ENCODE measurements at regions of chr5 and their contacts with region 1.

Region 1: GRCh38 chr5:81105261-81105877 is 127.8 kb upstream of the CKMT2 start:
- DNase-seq: no peak
- H3K4me3 ChIP-seq: no peak overlapping the region
- H3K4me3 Mint-ChIP-seq: no peak overlapping the region
- H3K27ac Mint-ChIP-seq: no peak overlapping the region
- H3K4me1 ChIP-seq: no peaks in the 10 kb centered on the region
- H3K4me1 Mint-ChIP-seq: no peaks in the 10 kb centered on the region
- H3K27me3 ChIP-seq: no peaks in the 10 kb centered on the region
- H3K27me3 Mint-ChIP-seq: no peaks in the 10 kb centered on the region
- CTCF ChIP-seq: no peak

Region 2: GRCh38 chr5:80686757-80687156 is 418.6 kb before region 1 on chr5:
- CTCF ChIA-PET with region 1: interaction called, 12 read pairs
- POLR2A ChIA-PET with region 1: interaction called, 7 read pairs
- intact Hi-C with region 1: loop called (anchors 1 kb)
- DNase-seq: no peak
- H3K4me3 ChIP-seq: no peak overlapping the region
- H3K4me3 Mint-ChIP-seq: no peak overlapping the region
- H3K27ac Mint-ChIP-seq: no peak overlapping the region
- H3K4me1 ChIP-seq: no peaks in the 10 kb centered on the region
- H3K4me1 Mint-ChIP-seq: no peaks in the 10 kb centered on the region
- H3K27me3 ChIP-seq: no peaks in the 10 kb centered on the region
- H3K27me3 Mint-ChIP-seq: no peaks in the 10 kb centered on the region
- CTCF ChIP-seq: peak; percentile 33 to 34

Region 3: GRCh38 chr5:80711938-80712337 is 393.4 kb before region 1 on chr5:
- CTCF ChIA-PET with region 1: interaction called, 7 read pairs
- POLR2A ChIA-PET with region 1: no interaction called
- intact Hi-C with region 1: loop called (anchors 1 kb)
- DNase-seq: peak; percentile 59 to 62
- H3K4me3 ChIP-seq: no peak overlapping the region
- H3K4me3 Mint-ChIP-seq: no peak overlapping the region
- H3K27ac Mint-ChIP-seq: no peak overlapping the region
- H3K4me1 ChIP-seq: peaks cover 4% of the 10 kb centered on the region; the same call in 1 of the 2 replicates
- H3K4me1 Mint-ChIP-seq: no peaks in the 10 kb centered on the region
- H3K27me3 ChIP-seq: no peaks in the 10 kb centered on the region
- H3K27me3 Mint-ChIP-seq: no peaks in the 10 kb centered on the region
- CTCF ChIP-seq: peak; percentile 57 to 60

Region 4: DNA sequence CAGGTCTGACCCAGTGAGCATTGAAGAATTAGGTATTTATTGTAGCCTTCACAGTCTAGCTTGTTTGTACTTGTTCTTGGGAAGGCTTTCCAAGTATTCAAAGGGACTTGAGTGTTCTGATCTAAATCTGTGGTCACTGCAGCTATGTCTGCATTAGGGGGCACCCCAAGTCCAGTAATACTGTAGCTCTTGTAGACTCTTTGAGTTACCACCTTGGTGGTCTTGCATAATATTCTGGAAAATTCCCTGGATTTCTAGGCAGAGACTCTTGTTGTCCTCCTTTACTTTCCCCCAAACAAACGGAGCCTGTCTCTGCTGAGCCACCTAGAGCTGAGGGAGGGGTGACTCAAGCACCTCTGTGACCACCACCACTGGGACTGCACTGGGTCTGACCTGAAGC is 301.0 kb before region 1 on chr5:
- CTCF ChIA-PET with region 1: interaction called, 3 read pairs
- POLR2A ChIA-PET with region 1: no interaction called
- intact Hi-C with region 1: loop called (anchors 10 kb)
- DNase-seq: peak in 1 of 2 experiments; percentile 22
- H3K4me3 ChIP-seq: no peak overlapping the region
- H3K4me3 Mint-ChIP-seq: no peak overlapping the region
- H3K27ac Mint-ChIP-seq: no peak overlapping the region
- H3K4me1 ChIP-seq: no peaks in the 10 kb centered on the region
- H3K4me1 Mint-ChIP-seq: peaks cover 5% of the 10 kb centered on the region
- H3K27me3 ChIP-seq: no peaks in the 10 kb centered on the region
- H3K27me3 Mint-ChIP-seq: no peaks in the 10 kb centered on the region
- CTCF ChIP-seq: no peak

Region 5: DNA sequence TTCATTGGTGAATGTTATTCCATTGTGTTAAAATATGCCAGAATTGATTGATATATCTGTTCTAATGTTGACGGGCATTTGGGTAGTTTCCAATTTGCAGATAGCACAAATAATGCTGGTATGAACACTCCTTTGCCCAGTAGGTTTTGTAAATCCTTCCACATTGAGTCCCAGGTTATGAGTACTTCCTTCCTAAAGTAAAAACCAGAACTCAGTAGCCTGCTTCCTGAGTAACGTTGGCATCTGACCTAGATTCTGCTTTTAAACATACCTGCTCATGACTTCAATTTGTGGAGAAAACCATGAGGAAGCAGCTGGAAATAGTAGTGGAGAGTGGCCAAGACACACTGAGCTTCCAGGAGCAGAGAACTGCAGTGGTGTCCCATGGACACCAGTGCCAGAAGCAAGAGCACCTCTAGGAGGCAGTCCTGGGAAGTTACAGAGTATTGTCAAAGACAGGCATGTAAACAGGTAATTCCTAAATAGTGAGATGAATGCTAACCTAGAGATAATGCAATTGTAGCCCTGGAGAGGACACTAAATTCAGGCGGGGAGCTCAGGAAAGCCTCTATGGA is 169.5 kb before region 1 on chr5:
- CTCF ChIA-PET with region 1: no interaction called
- POLR2A ChIA-PET with region 1: no interaction called
- intact Hi-C with region 1: loop called (anchors 2 kb)
- DNase-seq: no peak
- H3K4me3 ChIP-seq: no peak overlapping the region
- H3K4me3 Mint-ChIP-seq: no peak overlapping the region
- H3K27ac Mint-ChIP-seq: no peak overlapping the region
- H3K4me1 ChIP-seq: peaks cover 4% of the 10 kb centered on the region; the same call in 1 of the 2 replicates
- H3K4me1 Mint-ChIP-seq: peaks cover 8% of the 10 kb centered on the region
- H3K27me3 ChIP-seq: no peaks in the 10 kb centered on the region
- H3K27me3 Mint-ChIP-seq: no peaks in the 10 kb centered on the region
- CTCF ChIP-seq: no peak

Region 6: GRCh38 chr5:81117566-81117965 is 12.2 kb after region 1 on chr5:
- CTCF ChIA-PET with region 1: no interaction called
- POLR2A ChIA-PET with region 1: no interaction called
- intact Hi-C with region 1: no loop called
- DNase-seq: no peak
- H3K4me3 ChIP-seq: no peak overlapping the region
- H3K4me3 Mint-ChIP-seq: no peak overlapping the region
- H3K27ac Mint-ChIP-seq: no peak overlapping the region
- H3K4me1 ChIP-seq: no peaks in the 10 kb centered on the region
- H3K4me1 Mint-ChIP-seq: no peaks in the 10 kb centered on the region
- H3K27me3 ChIP-seq: no peaks in the 10 kb centered on the region
- H3K27me3 Mint-ChIP-seq: no peaks in the 10 kb centered on the region
- CTCF ChIP-seq: no peak

Measured in Caco-2 (cell line).